Sigmoid colon (tissue), 7 donors: ENCODE measurements at regions of chr4 and their contacts with region 1.

Region 1: GRCh38 chr4:169640261-169640870 is 20.0 kb downstream of the CLCN3 start:
- DNase-seq: no peak
- H3K4me3 ChIP-seq: no peak overlapping the region
- H3K27ac ChIP-seq: no peak overlapping the region
- H3K4me1 ChIP-seq: peaks cover 0 to 5% (median 0%) of the 10 kb centered on the region in 4 donors
- H3K27me3 ChIP-seq: no peaks in the 10 kb centered on the region
- CTCF ChIP-seq: no peak
- EP300 ChIP-seq: no peak
- POLR2A ChIP-seq: no peak

Region 2: GRCh38 chr4:169601016-169601771 is 39.2 kb before region 1 on chr4:
- intact Hi-C with region 1: no loop called
- DNase-seq: no peak
- H3K4me3 ChIP-seq: no peak overlapping the region
- H3K27ac ChIP-seq: no peak overlapping the region
- H3K4me1 ChIP-seq: peaks cover 0 to 3% (median 0%) of the 10 kb centered on the region in 4 donors
- H3K27me3 ChIP-seq: no peaks in the 10 kb centered on the region
- CTCF ChIP-seq: no peak
- EP300 ChIP-seq: no peak
- POLR2A ChIP-seq: no peak

Region 3: GRCh38 chr4:169659716-169660670 is 19.6 kb after region 1 on chr4:
- intact Hi-C with region 1: loop called (anchors 2 kb)
- DNase-seq: peak; percentile 90
- H3K4me3 ChIP-seq: peak overlapping the region; percentile 35 to 57 (median 45)
- H3K27ac ChIP-seq: peak overlapping the region; percentile 66 to 89 (median 80)
- H3K4me1 ChIP-seq: peaks cover 0 to 56% (median 24%) of the 10 kb centered on the region in 4 donors
- H3K27me3 ChIP-seq: no peaks in the 10 kb centered on the region
- CTCF ChIP-seq: no peak
- EP300 ChIP-seq: no peak
- POLR2A ChIP-seq: peak in 1 of 2 donors; percentile 21